ENCODE measurements at regions of chr21 and their contacts with region 1.

Region 1: GRCh38 chr21:34133802-34134201 is 60.4 kb downstream of the MRPS6 start:
- DNase-seq: peak in 3 of 4 experiments; percentile 41 to 51 (median 50)
- ATAC-seq: peak; percentile 79
- H3K4me3 ChIP-seq: no peak overlapping the region
- H3K27ac ChIP-seq: no peak overlapping the region
- H3K4me1 ChIP-seq: peaks cover 3 to 17% of the 10 kb centered on the region in 2 experiments; a peak in 3 of 5 replicates
- H3K27me3 ChIP-seq: no peaks in the 10 kb centered on the region
- CTCF ChIP-seq: peak; percentile 56 to 71 (median 60)
- EP300 ChIP-seq: no peak
- POLR2A ChIP-seq: no peak
- RAD21 ChIP-seq: peak in 1 of 2 experiments; percentile 44; a peak in 1 of 4 replicates

Region 2: DNA sequence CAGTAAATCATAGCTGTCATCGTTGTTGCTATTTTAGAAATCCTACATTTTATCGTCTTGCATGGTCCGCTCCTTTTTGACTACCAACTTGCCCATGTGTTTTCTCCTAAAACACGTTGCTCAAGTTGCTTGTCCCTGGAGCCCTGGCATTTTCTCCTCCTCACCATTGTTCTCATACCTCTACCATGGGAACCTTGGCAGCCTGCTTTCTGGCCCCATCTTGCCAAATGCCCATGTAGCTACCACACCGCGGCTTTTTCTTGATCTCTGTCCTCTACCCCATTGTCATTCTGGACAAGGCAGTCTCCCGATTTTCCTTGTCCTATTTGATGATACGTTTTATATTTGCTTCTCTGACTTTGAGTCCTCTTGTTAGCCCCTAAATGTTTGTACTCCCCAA is 10.2 kb before region 1 on chr21:
- CTCF ChIA-PET with region 1: no interaction called
- POLR2A ChIA-PET with region 1: interaction called, 11 read pairs
- in situ Hi-C with region 1: no loop called
- intact Hi-C with region 1: no loop called
- DNase-seq: no peak
- ATAC-seq: no peak
- H3K4me3 ChIP-seq: no peak overlapping the region
- H3K27ac ChIP-seq: no peak overlapping the region
- H3K4me1 ChIP-seq: no peaks in the 10 kb centered on the region; a peak in 1 of 5 replicates
- H3K27me3 ChIP-seq: no peaks in the 10 kb centered on the region
- CTCF ChIP-seq: no peak
- EP300 ChIP-seq: no peak
- POLR2A ChIP-seq: no peak
- RAD21 ChIP-seq: no peak

Measured in K562 (cell line).